ENCODE measurements at regions of chr3 and their contacts with region 1.

Region 1: DNA sequence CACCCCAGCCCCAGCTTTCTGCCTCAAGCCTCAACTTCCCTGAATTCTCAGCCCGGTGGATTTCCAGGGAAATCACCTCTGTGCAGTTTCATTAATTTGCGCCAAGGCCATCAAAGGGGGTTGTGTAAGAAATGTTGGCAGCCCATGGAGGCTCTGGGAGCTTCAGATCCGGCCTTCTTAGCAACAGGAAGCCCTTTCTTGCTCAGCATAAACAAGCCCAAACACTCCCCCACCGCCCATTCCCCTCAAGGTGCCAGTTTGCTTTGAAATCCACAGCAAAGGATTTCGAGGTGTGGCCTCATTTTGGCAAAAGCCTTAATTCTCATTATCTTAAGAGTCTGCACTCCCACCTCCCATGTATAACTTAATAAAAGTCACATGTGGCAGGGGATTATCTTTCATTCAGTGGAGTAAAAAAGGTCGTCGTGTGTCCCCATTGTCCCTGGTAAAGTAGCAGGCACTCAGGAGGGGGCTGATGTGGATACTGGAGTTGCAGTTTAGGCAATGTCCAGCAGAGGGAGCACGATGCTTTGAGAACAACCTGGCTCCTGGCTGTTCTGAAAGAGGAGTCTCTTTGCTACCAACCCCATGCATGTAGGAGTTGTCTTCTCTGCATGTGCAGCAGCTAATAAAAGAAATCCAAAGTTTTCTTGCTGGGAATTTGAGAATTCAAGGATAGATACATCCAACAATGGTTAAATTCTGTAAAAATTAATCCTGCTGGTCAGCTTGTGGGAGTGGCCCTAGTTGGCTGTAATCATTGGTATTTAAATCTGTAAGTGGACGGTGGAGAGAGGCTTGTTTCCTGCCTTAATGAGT is 39.5 kb downstream of the EBLN2 start:
- DNase-seq: peak; percentile 55 to 70
- ATAC-seq: peak; percentile 93
- H3K4me3 ChIP-seq: no peak overlapping the region
- H3K27ac ChIP-seq: no peak overlapping the region
- H3K4me1 ChIP-seq: no peaks in the 10 kb centered on the region
- H3K27me3 ChIP-seq: no peaks in the 10 kb centered on the region
- CTCF ChIP-seq: peak; percentile 81 to 93 (median 88)
- POLR2A ChIP-seq: no peak

Region 2: GRCh38 chr3:72353236-72354128 is 747.5 kb before region 1 on chr3:
- in situ Hi-C with region 1: no loop called
- intact Hi-C with region 1: no loop called
- DNase-seq: no peak
- ATAC-seq: no peak
- H3K4me3 ChIP-seq: no peak overlapping the region
- H3K27ac ChIP-seq: no peak overlapping the region
- H3K4me1 ChIP-seq: no peaks in the 10 kb centered on the region
- H3K27me3 ChIP-seq: no peaks in the 10 kb centered on the region
- CTCF ChIP-seq: no peak
- POLR2A ChIP-seq: no peak

Region 3: GRCh38 chr3:72818092-72818773 is 282.7 kb before region 1 on chr3:
- in situ Hi-C with region 1: no loop called
- intact Hi-C with region 1: no loop called
- DNase-seq: no peak
- ATAC-seq: no peak
- H3K4me3 ChIP-seq: no peak overlapping the region
- H3K27ac ChIP-seq: peak overlapping the region in 1 of 4 donors; percentile 93
- H3K4me1 ChIP-seq: peaks cover 33 to 40% of the 10 kb centered on the region in 2 donors
- H3K27me3 ChIP-seq: no peaks in the 10 kb centered on the region
- CTCF ChIP-seq: peak in 3 of 5 experiments; percentile 25 to 53 (median 46)
- POLR2A ChIP-seq: no peak

Region 4: GRCh38 chr3:73432023-73432705 is 331.2 kb after region 1 on chr3:
- in situ Hi-C with region 1: loop called in 2 of 4 experiments (anchors 5 kb)
- intact Hi-C with region 1: loop called (anchors 1 kb)
- DNase-seq: no peak
- ATAC-seq: peak in 1 of 2 donors; percentile 28
- H3K4me3 ChIP-seq: no peak overlapping the region
- H3K27ac ChIP-seq: no peak overlapping the region
- H3K4me1 ChIP-seq: peaks cover 24 to 30% of the 10 kb centered on the region in 2 donors
- H3K27me3 ChIP-seq: no peaks in the 10 kb centered on the region
- CTCF ChIP-seq: peak; percentile 37 to 67 (median 59)
- POLR2A ChIP-seq: no peak

Region 5: GRCh38 chr3:73661265-73661664 is 560.3 kb after region 1 on chr3:
- in situ Hi-C with region 1: loop called in 1 of 4 experiments (anchors 25 kb)
- intact Hi-C with region 1: no loop called
- DNase-seq: no peak
- ATAC-seq: no peak
- H3K4me3 ChIP-seq: no peak overlapping the region
- H3K27ac ChIP-seq: no peak overlapping the region
- H3K4me1 ChIP-seq: no peaks in the 10 kb centered on the region
- H3K27me3 ChIP-seq: no peaks in the 10 kb centered on the region
- CTCF ChIP-seq: no peak
- POLR2A ChIP-seq: no peak

Region 6: DNA sequence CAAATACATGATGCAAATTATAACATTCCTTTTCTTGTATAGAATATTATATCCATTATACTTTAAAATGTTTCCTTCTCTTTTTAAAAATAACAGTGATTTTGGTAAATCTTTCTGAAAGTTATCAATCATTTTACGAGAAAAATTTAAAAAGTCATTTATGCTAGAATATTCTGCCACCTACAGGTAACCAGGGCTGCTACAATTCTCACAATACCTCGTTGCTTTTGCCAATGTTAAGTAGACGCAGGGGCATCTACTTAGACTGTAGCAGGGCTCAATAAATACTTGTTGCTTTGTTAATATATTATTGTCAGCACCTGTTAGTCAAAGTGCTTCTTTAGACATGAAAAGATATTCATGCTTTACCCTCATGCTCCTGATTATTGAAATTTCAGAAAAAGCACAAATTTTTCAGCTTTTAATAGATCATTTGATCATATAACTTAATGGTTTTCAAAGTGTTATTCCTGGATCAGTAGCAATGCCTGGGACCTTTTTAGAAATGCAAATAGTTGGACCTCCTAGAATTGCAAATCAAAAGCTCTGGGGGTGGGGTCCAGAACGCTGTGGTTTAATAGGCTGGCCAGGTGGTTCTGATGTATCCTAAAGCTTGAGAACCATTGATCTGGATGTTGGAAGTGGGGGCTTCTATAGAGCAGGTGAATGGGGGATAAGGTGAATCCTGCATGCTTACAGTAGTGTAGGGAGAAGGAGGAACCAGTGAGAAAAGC is 747.4 kb after region 1 on chr3:
- in situ Hi-C with region 1: loop called (anchors 10 to 25 kb)
- intact Hi-C with region 1: loop called (anchors 10 kb)
- DNase-seq: no peak
- ATAC-seq: peak in 1 of 2 donors; percentile 52
- H3K4me3 ChIP-seq: no peak overlapping the region
- H3K27ac ChIP-seq: no peak overlapping the region
- H3K4me1 ChIP-seq: no peaks in the 10 kb centered on the region
- H3K27me3 ChIP-seq: no peaks in the 10 kb centered on the region
- CTCF ChIP-seq: peak; percentile 38 to 73 (median 56)
- POLR2A ChIP-seq: no peak

Region 7: DNA sequence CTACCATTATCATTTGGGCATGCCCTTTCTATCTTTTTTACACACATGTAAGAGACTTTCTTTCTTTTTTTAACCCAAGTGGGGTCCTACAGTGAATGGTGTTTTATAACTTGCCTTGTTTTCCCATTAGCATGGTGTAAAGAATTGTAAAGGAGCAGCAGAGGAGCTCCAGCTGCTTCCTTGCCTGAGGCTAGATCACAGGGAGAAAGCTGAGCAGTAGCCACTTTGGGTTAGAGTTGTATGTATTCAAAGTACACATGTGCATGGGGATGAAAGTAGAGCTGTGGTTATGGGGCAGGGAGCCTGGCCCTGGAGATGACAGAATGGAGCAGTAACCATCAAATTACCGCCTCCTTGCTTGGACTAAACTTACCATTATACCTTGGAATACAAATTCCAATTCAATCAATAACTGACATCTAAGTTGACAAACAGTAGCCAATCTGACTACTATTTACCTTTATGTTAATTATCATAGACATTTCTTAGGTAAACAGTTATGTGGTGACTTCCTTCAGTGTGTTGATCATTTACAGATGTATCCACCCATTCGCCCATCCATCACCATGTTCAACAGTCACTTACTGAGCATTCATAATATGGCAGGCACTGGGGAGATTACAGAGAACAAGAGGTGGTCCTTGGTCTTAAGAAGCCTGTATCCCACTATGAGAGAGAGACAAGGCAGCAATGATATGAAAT is 755.0 kb after region 1 on chr3:
- in situ Hi-C with region 1: loop called in 3 of 4 experiments (anchors 10 to 25 kb)
- intact Hi-C with region 1: loop called (anchors 10 kb)
- DNase-seq: no peak
- ATAC-seq: no peak
- H3K4me3 ChIP-seq: no peak overlapping the region
- H3K27ac ChIP-seq: no peak overlapping the region
- H3K4me1 ChIP-seq: no peaks in the 10 kb centered on the region
- H3K27me3 ChIP-seq: no peaks in the 10 kb centered on the region
- CTCF ChIP-seq: no peak
- POLR2A ChIP-seq: no peak

Region 8: DNA sequence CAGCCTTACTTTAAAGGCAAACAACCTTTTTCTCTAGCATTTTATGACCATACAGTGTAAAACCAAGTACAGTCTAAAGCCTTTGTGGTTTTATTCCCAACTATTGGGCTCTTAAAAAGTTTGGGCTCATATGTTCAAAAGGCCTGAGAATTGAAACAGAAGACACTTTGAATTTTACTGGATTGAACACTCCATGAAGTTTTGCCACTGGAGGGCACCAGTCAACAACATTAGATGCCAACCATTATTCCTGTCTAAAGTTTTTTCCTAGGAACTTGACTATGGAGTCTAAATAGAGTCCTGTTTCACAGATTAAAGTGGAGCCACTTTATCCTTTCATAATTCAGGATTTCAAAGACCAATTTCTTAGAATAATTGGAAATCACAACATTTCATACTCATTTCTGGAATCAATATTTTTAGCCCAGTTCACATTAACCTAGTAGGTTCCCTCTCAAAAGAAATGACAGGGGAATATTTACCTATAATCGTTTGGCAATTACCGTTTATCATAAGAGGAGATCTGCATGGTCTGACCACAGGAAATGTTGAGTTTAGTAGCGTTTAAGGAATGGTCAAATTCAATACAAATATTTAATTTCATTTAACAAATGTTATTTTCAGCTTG is 767.9 kb after region 1 on chr3:
- in situ Hi-C with region 1: loop called in 2 of 4 experiments (anchors 25 kb)
- intact Hi-C with region 1: no loop called
- DNase-seq: no peak
- ATAC-seq: no peak
- H3K4me3 ChIP-seq: no peak overlapping the region
- H3K27ac ChIP-seq: no peak overlapping the region
- H3K4me1 ChIP-seq: no peaks in the 10 kb centered on the region
- H3K27me3 ChIP-seq: no peaks in the 10 kb centered on the region
- CTCF ChIP-seq: peak in 3 of 5 experiments; percentile 27 to 49 (median 42)
- POLR2A ChIP-seq: no peak